Psoas muscle (tissue), 8 donors: ENCODE measurements at regions of chr10 and their contacts with region 1.

Region 1: GRCh38 chr10:125719146-125720001 is at the start of gene EDRF1:
- DNase-seq: peak; percentile 99 to 100
- ATAC-seq: peak; percentile 100
- H3K4me3 ChIP-seq: peak within 1 kb of the TSS; percentile 92
- H3K27ac ChIP-seq: peak within 1 kb of the TSS; percentile 85
- H3K4me1 ChIP-seq: peaks cover 11% of the 10 kb centered on the region
- H3K27me3 ChIP-seq: no peaks in the 10 kb centered on the region
- CTCF ChIP-seq: no peak
- total RNA-seq, gene EDRF1: 7.6 to 13.8 (median 10.6) TPM

Region 2: GRCh38 chr10:125744909-125745308 is 25.5 kb after region 1 on chr10:
- intact Hi-C with region 1: no loop called
- DNase-seq: no peak
- ATAC-seq: no peak
- H3K4me3 ChIP-seq: no peak overlapping the region
- H3K27ac ChIP-seq: no peak overlapping the region
- H3K4me1 ChIP-seq: no peaks in the 10 kb centered on the region
- H3K27me3 ChIP-seq: no peaks in the 10 kb centered on the region
- CTCF ChIP-seq: no peak

Region 3: GRCh38 chr10:125822878-125823662 is 103.7 kb after region 1 on chr10 and contains the starts of genes BCCIP and UROS:
- intact Hi-C with region 1: loop called in 1 of 2 experiments (anchors 5 kb)
- DNase-seq: peak; percentile 93 to 97
- ATAC-seq: peak; percentile 95 to 97 (median 96)
- H3K4me3 ChIP-seq: peak within 1 kb of the TSS; percentile 99
- H3K27ac ChIP-seq: peak within 1 kb of the TSS; percentile 92
- H3K4me1 ChIP-seq: peaks cover 35% of the 10 kb centered on the region
- H3K27me3 ChIP-seq: no peaks in the 10 kb centered on the region
- CTCF ChIP-seq: no peak
- total RNA-seq, gene BCCIP: 57.6 to 87.6 (median 78.2) TPM
- total RNA-seq, gene UROS: 47.5 to 73.6 (median 59.0) TPM